HEK293T (cell line): ENCODE measurements at regions of chr7 and their contacts with region 1.

Region 1: DNA sequence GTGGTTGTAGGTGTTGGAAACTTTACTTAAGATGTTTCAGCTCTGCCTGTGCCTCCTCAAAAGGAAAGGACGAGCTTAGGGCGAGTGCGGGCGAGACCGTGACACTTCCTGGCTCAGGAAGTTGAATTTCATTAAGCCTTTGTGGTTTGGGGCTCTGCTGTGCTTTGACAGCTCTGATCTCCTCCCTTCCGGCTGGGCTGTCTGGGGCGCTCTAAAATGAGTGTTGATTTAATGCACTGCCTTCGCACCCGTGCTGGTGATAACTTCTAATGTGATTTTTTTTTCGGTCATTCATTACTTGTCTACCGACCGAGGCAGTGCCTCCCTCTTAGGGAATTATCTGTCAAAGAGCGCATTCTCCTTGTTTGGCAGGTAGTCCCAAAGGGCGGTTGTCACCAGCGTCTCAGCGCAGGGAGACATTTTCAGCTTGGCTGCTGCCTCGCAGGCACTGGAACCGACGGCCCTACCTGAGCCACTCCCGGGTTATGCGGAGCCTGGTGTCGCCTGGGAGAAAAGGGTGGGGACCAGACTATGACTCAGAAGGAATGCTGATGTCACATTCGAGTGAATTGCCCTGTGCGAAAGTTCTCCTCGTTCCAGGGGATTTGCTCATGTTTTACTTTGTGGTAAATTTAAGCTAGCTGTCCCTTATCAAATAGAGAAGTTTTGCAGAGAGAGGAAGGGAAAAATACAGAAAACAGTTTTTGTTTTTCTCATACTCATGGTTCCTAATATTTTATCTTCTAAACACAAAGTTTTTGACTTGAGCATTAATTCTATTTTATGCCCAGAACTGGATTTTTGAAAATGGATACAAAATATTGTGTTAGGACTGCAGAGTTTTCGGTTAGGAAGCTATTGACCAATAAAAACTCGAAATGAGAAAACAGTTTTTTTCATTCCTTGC is 920 bp downstream of the TES start:
- DNase-seq: peak; percentile 74

Region 2: DNA sequence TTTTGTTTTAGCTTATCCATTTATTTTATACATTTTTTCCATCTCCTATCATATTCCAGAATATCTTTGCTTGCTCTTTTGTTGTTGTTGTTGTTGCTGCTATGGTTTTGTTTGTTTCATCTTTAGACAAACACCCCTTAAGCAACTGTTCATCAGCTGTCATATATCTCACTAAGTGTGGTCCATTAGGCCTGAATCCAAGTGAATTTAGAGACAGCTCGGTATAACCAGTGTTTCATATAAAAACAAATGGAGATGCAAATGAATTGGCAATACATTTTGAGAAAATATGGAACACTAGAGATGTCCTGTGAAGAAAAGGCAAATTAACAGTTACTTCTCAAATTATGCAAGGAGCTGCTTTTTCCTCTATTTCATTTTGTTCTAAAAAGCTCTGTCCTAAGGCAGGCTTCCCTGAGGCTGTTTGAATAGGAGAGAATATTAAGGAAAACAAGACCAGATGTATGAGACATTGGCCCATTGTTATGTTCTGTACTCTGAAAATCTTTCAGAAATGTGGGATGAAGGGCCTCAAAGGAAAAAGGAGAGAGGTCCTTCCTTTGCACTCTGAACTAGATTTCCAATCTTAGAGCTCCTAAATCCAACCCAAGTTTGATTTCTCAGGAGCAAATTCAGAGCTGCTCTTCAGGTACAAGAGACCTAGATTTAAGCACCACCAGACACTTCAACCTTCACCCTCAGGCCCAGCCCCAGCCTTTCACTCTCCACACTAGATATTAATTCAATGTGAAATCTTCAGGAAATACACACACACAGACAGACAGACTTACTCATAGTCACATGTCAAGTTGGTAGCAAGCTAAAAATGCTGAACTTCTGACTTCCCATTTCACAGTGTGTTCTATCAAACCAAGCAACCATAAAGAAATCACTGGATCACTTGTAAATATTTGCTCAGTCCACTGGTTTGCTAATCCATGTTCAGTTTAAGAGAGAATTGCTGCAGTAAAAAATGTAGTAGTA is 186.1 kb before region 1 on chr7:
- CTCF ChIA-PET with region 1: no interaction called
- POLR2A ChIA-PET with region 1: no interaction called
- DNase-seq: no peak

Region 3: GRCh38 chr7:116200963-116201362 is 10.3 kb before region 1 on chr7:
- CTCF ChIA-PET with region 1: interaction called, 3 read pairs
- POLR2A ChIA-PET with region 1: interaction called, 25 read pairs
- DNase-seq: no peak

Region 4: GRCh38 chr7:116224492-116225098 is 13.3 kb after region 1 on chr7:
- CTCF ChIA-PET with region 1: interaction called, 3 read pairs
- POLR2A ChIA-PET with region 1: interaction called, 13 read pairs
- DNase-seq: no peak